Dendritic cell treated with granulocyte-macrophage colony-stimulating factor and Interleukin-4, amounts not matched to agents 40 ng/mL and 50 ng/mL, for 4 days (primary cell): ENCODE measurements at regions of chr2 and their contacts with region 1.

Region 1: GRCh38 chr2:237691908-237692600 is 64.7 kb downstream of the LRRFIP1 start:
- H3K4me3 Mint-ChIP-seq: peak overlapping the region; percentile 99
- H3K27ac Mint-ChIP-seq: peak overlapping the region; percentile 93
- H3K4me1 Mint-ChIP-seq: peaks cover 74% of the 10 kb centered on the region
- H3K27me3 Mint-ChIP-seq: no peaks in the 10 kb centered on the region

Region 2: DNA sequence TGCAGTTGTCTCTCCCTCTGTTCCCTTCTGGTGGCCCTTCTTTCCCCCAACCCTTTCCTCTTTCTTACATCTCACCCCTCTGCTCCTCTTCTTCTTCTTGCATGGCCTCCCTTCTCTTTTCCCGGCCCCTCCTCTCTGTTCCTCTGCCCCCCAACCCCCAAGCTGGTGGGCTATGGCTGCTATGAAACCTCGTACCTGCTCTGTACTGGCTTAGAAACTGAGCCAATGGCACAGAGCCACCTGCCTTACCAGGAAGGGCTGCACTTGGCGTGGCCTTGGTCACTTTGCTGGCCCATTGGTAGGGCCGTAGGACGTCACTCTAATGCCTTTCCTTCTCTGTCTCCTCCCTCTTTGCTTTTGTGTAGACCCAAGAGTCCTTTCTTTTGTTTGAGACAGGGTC is 14.2 kb after region 1 on chr2:
- intact Hi-C with region 1: loop called (anchors 1 kb)
- H3K4me3 Mint-ChIP-seq: no peak overlapping the region
- H3K27ac Mint-ChIP-seq: peak overlapping the region; percentile 93
- H3K4me1 Mint-ChIP-seq: peaks cover 87% of the 10 kb centered on the region
- H3K27me3 Mint-ChIP-seq: no peaks in the 10 kb centered on the region

Region 3: GRCh38 chr2:237723602-237724001 is 31.5 kb after region 1 on chr2:
- intact Hi-C with region 1: loop called (anchors 5 kb)
- H3K4me3 Mint-ChIP-seq: no peak overlapping the region
- H3K27ac Mint-ChIP-seq: peak overlapping the region; percentile 64
- H3K4me1 Mint-ChIP-seq: peaks cover 58% of the 10 kb centered on the region
- H3K27me3 Mint-ChIP-seq: no peaks in the 10 kb centered on the region

Region 4: DNA sequence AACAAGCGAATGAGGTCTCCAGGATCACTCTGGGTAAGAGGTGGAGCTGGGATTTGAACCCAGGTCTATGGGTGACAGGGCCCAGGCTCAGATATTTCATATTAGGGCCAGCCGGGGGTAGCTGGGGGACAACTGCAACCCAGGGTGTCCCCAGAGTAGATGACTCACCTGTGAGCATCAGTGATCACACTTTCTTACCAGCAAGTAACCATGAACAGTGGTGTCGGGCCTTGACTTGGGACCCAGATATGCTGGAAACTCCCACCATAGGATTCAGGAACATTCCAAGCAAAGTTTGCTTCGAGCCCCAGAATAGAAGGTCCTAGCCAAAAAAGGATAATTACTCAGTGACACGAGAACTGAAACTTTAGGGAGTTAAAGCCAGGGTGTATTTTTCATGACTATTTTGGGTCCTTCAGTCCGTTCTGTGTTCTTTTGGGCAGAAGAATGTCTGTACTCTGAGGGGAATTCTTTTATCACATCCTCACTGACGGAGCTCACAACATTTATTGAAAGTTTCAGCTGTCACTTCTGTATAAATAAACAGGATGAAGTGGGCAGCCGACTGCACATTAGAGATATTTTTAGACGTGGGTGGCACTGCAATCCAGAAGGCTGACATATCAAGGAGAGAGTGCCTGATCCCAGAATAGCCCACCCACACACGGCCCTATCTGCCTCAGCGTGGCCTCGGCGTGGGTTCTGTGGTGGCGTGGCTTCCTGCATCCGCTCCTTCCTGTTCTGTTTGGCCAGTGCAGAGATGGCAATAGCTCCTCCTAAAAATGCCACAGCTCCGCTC is 212.9 kb after region 1 on chr2:
- intact Hi-C with region 1: no loop called
- H3K4me3 Mint-ChIP-seq: peak overlapping the region; percentile 42
- H3K27ac Mint-ChIP-seq: peak overlapping the region; percentile 87
- H3K4me1 Mint-ChIP-seq: peaks cover 63% of the 10 kb centered on the region
- H3K27me3 Mint-ChIP-seq: peaks cover 18% of the 10 kb centered on the region